Activated CD4-positive, alpha-beta memory T cell treated with anti-CD3 and anti-CD28 coated beads for 36 hours (primary cell): ENCODE measurements at regions of chr3 and their contacts with region 1.

Region 1: DNA sequence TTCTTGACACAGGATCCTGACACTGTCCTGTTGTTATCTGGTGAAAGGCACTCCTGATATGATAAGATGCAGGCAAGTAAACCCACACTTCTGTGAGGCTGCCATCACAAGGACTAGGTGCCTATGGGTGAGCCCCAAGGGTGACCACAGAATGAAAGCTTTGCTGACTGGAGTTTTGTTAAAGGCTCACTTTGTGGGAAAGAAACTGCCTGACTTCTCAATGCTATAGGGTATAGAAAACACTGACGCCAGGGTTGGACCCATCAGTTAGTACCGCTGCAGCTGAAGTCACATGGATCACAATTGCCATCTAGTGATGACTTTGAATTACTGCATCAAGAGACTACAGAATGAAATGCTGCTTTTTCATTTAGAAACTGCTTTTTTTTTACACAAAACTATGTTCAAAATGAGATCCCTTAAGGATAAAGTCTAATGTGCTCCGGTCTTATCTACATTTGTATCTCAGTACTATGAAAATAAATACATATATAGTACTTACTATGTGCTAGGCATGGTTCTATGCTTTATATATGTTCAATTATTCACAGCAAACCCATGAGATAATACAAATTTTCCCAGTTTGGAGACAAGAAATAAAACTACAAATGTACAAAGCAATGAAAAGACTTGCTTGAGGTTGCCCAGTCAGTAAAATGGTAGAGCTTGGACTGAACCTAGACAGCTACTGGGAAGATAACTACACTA is 64.2 kb upstream of the CMSS1 start:
- DNase-seq: peak; percentile 19
- H3K4me3 Mint-ChIP-seq: no peak overlapping the region
- H3K27ac Mint-ChIP-seq: no peak overlapping the region
- H3K4me1 Mint-ChIP-seq: no peaks in the 10 kb centered on the region
- H3K27me3 Mint-ChIP-seq: peaks cover 3% of the 10 kb centered on the region

Region 2: DNA sequence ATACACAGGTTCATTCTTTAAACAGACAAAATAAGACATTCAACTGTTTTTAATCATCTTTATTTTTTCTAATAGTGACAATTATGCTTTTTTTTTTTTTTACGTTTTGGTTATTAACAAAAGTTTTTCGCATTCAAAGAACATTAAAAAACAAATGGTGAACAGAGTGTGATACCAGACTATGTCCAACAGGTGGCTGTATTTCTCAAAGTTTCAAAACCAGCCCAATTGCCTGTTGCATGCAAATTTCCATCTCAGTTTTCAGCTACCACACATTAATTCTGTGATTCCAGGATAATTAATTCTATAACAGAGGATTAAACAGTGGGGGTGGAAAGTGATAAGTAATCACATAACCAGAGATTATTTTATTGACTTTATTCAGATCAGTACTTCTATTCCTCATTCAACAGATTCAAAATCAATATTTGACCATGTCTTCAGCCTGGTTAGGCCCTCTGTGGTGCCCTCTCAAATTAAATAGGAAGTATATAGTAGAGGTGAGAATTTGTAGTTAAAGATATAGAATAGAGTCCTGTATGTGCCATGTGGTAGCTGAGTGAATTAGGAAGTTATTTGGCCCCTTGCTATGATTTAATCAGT is 729.7 kb before region 1 on chr3:
- CTCF ChIA-PET with region 1: interaction called, 13 read pairs
- POLR2A ChIA-PET with region 1: no interaction called
- intact Hi-C with region 1: loop called (anchors 1 kb)
- DNase-seq: no peak
- H3K4me3 Mint-ChIP-seq: no peak overlapping the region
- H3K27ac Mint-ChIP-seq: no peak overlapping the region
- H3K4me1 Mint-ChIP-seq: no peaks in the 10 kb centered on the region
- H3K27me3 Mint-ChIP-seq: peaks cover 4% of the 10 kb centered on the region

Region 3: DNA sequence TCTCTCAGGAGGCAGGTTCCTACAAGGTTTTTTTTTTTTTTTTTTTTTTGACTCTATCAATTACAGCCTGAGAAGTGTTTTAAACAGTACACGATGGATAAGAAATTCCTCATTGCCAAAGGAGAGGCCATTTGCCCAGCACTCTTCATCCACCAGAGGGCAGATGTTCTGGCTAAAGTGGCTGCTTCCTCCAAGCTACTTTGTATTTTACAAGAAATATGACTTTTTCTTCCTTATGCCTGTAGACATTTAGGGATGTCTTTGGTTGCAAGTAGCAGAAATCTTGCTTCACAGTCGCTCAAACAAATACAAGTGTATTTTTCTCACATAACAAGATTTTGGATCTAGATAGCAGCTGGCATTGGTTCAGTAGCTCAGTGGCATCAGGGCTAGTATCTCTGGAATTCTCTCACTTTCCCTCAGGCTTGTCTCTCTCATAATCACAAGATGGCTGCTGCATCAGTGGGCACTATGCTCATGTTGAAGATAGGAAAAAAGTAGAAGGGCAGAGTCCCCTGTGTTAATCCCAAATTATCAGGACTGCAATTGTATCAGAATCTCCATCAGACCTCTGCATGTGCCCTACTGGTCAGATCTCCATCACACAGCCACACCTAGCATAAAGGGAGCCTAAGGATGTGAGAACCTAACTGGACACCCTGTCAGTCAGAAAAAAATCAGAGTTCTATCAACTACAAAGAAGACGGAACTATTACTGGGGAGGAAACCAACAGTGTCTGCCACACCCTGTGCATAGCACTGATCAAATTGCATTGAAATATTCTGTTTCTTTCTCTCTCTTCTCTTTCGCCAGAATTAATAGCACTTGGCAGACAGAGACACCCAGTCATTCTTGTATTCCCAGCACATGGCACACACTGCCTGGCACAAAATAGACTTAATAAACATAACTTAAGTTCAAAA is 253.9 kb before region 1 on chr3:
- CTCF ChIA-PET with region 1: interaction called, 3 read pairs
- POLR2A ChIA-PET with region 1: no interaction called
- intact Hi-C with region 1: loop called (anchors 5 kb)
- DNase-seq: peak; percentile 15
- H3K4me3 Mint-ChIP-seq: no peak overlapping the region
- H3K27ac Mint-ChIP-seq: no peak overlapping the region
- H3K4me1 Mint-ChIP-seq: no peaks in the 10 kb centered on the region
- H3K27me3 Mint-ChIP-seq: no peaks in the 10 kb centered on the region

Region 4: DNA sequence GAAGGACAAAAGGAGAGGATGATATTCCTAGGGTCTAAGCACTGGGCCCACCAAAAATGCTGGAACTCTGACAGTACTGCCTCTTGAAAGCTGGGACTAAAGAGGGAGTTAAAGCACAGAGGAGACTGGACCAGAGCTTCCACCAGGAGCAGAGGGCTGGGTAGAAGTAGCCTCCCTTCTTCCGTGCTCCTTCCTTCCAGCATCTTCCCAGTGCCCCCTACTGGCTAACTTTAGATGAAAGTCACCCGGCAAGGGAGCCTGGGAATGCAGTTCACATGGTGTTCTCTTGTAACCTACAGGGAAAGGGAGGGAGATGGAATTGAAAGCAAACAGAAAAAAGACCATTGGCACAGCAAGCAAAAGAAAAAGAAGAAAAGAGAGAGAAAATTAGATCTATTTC is 221.2 kb before region 1 on chr3:
- CTCF ChIA-PET with region 1: no interaction called
- POLR2A ChIA-PET with region 1: no interaction called
- intact Hi-C with region 1: no loop called
- DNase-seq: peak; percentile 20
- H3K4me3 Mint-ChIP-seq: no peak overlapping the region
- H3K27ac Mint-ChIP-seq: no peak overlapping the region
- H3K4me1 Mint-ChIP-seq: no peaks in the 10 kb centered on the region
- H3K27me3 Mint-ChIP-seq: peaks cover 2% of the 10 kb centered on the region

Region 5: GRCh38 chr3:99645277-99646106 is 107.9 kb before region 1 on chr3:
- CTCF ChIA-PET with region 1: no interaction called
- POLR2A ChIA-PET with region 1: no interaction called
- intact Hi-C with region 1: loop called (anchors 10 kb)
- DNase-seq: no peak
- H3K4me3 Mint-ChIP-seq: no peak overlapping the region
- H3K27ac Mint-ChIP-seq: no peak overlapping the region
- H3K4me1 Mint-ChIP-seq: no peaks in the 10 kb centered on the region
- H3K27me3 Mint-ChIP-seq: peaks cover 12% of the 10 kb centered on the region